ENCODE measurements at regions of chr9 and their contacts with region 1.

Region 1: DNA sequence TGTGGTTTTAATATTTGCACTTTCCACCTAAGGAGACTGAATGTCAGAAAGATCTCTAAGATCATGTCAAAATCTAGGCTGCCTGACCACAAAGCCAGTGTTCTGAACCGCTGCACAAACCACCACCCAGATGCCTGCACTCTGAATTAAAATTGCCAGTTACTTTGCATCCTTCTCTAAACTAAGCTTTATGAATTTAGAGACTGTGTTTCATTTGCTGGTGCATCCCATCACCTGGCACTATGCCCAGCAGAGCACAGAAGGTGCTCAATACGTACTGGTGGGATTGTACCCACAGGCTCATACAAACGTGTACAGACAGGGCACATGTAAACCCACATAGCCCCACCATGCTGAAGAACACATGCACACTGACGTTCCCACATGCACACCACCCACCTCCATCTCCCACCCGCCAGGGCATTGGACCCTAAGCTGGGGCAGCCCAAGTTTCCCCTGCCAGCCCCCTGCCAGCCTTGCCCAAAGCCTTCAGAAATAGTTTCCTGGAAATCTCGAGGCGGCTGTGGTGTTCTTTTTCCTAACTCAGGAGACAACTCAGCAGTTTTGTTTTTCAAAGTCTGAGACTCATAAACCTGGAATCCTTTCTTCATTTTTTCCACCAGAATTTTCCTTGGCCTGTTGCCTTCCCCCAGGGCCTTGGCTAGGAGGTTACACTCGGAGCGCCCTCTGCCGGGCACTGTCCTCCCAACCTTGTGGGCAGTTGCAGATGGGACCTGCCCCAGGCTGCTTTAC is 9.6 kb upstream of the TRAF1 start:
- DNase-seq: peak; percentile 98
- ATAC-seq: peak; percentile 80

Region 2: GRCh38 chr9:120767456-120768167 is 168.6 kb before region 1 on chr9:
- intact Hi-C with region 1: loop called (anchors 10 kb)
- DNase-seq: no peak
- ATAC-seq: no peak

Measured in left ventricle myocardium superior (tissue), 1 donor.